Stomach (tissue), 19 donors: ENCODE measurements at regions of chr19 and their contacts with region 1.

Region 1: GRCh38 chr19:16247353-16248182 is 49.9 kb downstream of the AP1M1 start:
- DNase-seq: peak; percentile 89 to 93
- H3K4me3 ChIP-seq: no peak overlapping the region
- H3K27ac ChIP-seq: peak overlapping the region in 1 of 5 donors; percentile 12
- H3K4me1 ChIP-seq: peaks cover 0 to 14% (median 7%) of the 10 kb centered on the region in 4 donors
- H3K27me3 ChIP-seq: no peaks in the 10 kb centered on the region
- CTCF ChIP-seq: peak in 6 of 7 experiments; percentile 17 to 98 (median 94)
- EP300 ChIP-seq: no peak
- POLR2A ChIP-seq: no peak

Region 2: GRCh38 chr19:15962319-15962718 is 285.2 kb before region 1 on chr19:
- intact Hi-C with region 1: no loop called
- DNase-seq: no peak
- H3K4me3 ChIP-seq: no peak overlapping the region
- H3K27ac ChIP-seq: no peak overlapping the region
- H3K4me1 ChIP-seq: no peaks in the 10 kb centered on the region
- H3K27me3 ChIP-seq: peaks cover 0 to 46% (median 12%) of the 10 kb centered on the region in 3 donors
- CTCF ChIP-seq: no peak
- EP300 ChIP-seq: no peak
- POLR2A ChIP-seq: no peak

Region 3: DNA sequence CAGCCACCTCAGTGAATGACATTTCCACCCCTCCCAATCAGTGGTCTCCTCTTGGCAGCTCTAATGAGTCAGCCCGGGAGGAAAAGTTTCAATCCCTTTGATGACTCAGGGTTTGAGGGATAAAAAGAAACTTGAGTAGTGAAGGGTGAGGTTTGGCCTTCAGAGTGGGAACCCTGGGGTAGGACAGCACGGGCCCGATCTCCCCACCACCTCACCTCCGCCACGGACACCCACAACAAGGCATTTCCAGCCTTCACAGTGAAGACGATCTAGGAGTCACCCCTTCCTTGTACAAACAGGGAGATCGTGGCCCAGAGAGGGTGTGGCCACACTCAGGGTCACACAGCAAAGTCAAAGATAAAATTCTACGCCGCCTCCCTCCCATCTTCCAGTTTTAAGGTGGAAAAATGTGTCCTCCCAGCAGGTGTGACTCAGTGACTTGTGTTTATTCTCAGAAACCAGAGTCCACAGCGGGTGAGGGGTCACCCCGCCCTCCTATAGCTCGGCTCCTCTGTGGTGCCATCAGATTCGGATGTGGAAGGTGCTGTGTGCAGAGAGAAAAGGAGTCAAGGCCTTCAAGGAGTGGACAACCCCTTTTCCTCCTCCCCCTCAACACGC is 86.5 kb before region 1 on chr19:
- intact Hi-C with region 1: no loop called
- DNase-seq: no peak
- H3K4me3 ChIP-seq: no peak overlapping the region
- H3K27ac ChIP-seq: no peak overlapping the region
- H3K4me1 ChIP-seq: no peaks in the 10 kb centered on the region
- H3K27me3 ChIP-seq: no peaks in the 10 kb centered on the region
- CTCF ChIP-seq: no peak
- EP300 ChIP-seq: no peak
- POLR2A ChIP-seq: no peak

Region 4: GRCh38 chr19:16382775-16383543 is 135.4 kb after region 1 on chr19:
- intact Hi-C with region 1: loop called (anchors 5 kb)
- DNase-seq: peak; percentile 82 to 94
- H3K4me3 ChIP-seq: no peak overlapping the region
- H3K27ac ChIP-seq: peak overlapping the region; percentile 44 to 88 (median 83)
- H3K4me1 ChIP-seq: peaks cover 10 to 36% (median 15%) of the 10 kb centered on the region in 4 donors
- H3K27me3 ChIP-seq: no peaks in the 10 kb centered on the region
- CTCF ChIP-seq: peak in 5 of 7 experiments; percentile 46 to 88 (median 74)
- EP300 ChIP-seq: no peak
- POLR2A ChIP-seq: no peak